ENCODE measurements at regions of chr5 and their contacts with region 1.

Region 1: DNA sequence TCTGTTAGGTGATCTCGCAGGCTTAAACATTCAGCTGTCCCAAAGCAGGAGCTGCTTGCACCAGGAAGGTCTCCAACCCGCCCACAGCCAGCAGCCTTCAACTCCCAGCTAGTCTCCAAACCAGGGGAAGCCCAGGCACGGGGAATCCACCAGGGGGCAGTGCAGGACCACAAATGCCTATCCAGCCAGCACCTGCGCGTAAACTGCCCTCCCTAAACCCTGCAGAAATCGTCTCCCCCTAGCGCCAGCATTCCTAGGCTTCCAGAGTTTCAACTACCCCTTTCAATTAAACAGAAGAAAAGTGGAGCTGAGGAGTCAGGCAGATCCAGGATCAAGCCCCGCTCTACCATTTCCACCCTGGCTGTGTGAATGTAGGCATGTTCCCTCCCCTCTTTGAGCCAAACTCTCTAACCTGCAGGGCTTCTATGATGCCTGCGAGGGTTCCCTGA is 72.0 kb downstream of the HRH2 start:
- DNase-seq: peak; percentile 82 to 96
- H3K4me3 ChIP-seq: no peak overlapping the region
- H3K4me1 ChIP-seq: no peaks in the 10 kb centered on the region
- H3K27me3 ChIP-seq: no peaks in the 10 kb centered on the region

Region 2: GRCh38 chr5:174472956-174473355 is 1256.9 kb before region 1 on chr5:
- in situ Hi-C with region 1: no loop called
- DNase-seq: no peak
- H3K4me3 ChIP-seq: no peak overlapping the region
- H3K4me1 ChIP-seq: no peaks in the 10 kb centered on the region
- H3K27me3 ChIP-seq: no peaks in the 10 kb centered on the region

Region 3: GRCh38 chr5:175168882-175169507 is 560.9 kb before region 1 on chr5:
- in situ Hi-C with region 1: no loop called
- DNase-seq: no peak
- H3K4me3 ChIP-seq: no peak overlapping the region
- H3K4me1 ChIP-seq: no peaks in the 10 kb centered on the region
- H3K27me3 ChIP-seq: no peaks in the 10 kb centered on the region

Region 4: GRCh38 chr5:176337913-176338312 is 608.1 kb after region 1 on chr5:
- in situ Hi-C with region 1: loop called (anchors 25 kb)
- DNase-seq: no peak
- H3K4me3 ChIP-seq: no peak overlapping the region
- H3K4me1 ChIP-seq: no peaks in the 10 kb centered on the region
- H3K27me3 ChIP-seq: no peaks in the 10 kb centered on the region

Region 5: GRCh38 chr5:176578391-176578808 is 848.5 kb after region 1 on chr5:
- in situ Hi-C with region 1: loop called (anchors 25 kb)
- DNase-seq: peak in 1 of 2 experiments; percentile 66
- H3K4me3 ChIP-seq: no peak overlapping the region
- H3K4me1 ChIP-seq: no peaks in the 10 kb centered on the region
- H3K27me3 ChIP-seq: no peaks in the 10 kb centered on the region

Region 6: DNA sequence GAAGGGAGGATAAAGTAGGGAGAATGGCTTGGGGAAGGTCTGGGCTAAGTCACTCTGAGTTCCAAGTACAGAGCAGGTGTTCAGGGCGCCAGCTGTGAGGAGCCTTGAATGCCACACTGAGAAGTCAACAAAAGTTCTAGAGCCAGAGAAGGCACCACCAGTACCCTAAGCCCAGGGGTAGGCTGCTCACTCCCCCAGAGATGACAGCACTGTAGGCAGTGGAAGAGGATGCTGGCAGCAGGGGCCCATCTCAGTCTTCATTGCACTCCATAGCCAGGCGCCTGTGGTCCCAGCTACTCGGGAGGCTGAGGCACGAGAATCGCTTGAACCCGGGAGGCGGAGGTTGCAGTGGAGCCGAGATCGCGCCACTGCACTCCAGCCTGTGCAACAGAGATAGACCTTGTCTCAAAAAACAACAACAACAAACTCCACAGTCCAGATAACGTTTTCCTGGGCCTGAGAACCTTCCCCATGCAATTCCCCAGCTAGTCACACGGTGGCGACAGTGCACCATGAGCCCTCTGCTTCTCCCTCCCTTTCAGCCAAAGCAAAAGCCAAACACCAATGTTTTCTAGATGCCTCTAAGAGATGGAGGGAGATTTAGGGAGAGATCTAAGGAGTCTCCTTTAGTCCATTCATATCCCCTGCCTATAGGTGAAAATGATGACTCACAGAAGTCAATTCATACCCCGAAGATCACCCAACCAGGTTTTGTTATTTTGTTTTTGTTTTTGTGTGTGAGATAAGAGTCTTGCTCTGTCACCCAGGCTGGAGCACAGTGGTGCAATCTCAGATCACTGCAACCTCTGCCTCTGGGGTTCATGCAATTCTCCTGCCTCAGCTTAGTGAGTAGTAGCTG is 1383.9 kb after region 1 on chr5:
- in situ Hi-C with region 1: loop called (anchors 25 kb)
- DNase-seq: peak; percentile 78 to 86
- H3K4me3 ChIP-seq: no peak overlapping the region
- H3K4me1 ChIP-seq: no peaks in the 10 kb centered on the region; the same call in 1 of the 2 replicates
- H3K27me3 ChIP-seq: no peaks in the 10 kb centered on the region